CD4-positive, alpha-beta T cell (primary cell): ENCODE measurements at regions of chr16 and their contacts with region 1.

Region 1: GRCh38 chr16:55465077-55465896 is 13.7 kb upstream of the MMP2 start:
- DNase-seq: peak; percentile 72 to 88 (median 76)
- ATAC-seq: peak; percentile 99
- H3K4me3 ChIP-seq: no peak overlapping the region
- H3K4me3 Mint-ChIP-seq: no peak overlapping the region
- H3K27ac ChIP-seq: no peak overlapping the region
- H3K27ac Mint-ChIP-seq: no peak overlapping the region
- H3K4me1 ChIP-seq: peaks cover 2% of the 10 kb centered on the region
- H3K4me1 Mint-ChIP-seq: no peaks in the 10 kb centered on the region
- H3K27me3 ChIP-seq: no peaks in the 10 kb centered on the region
- H3K27me3 Mint-ChIP-seq: peaks cover 5% of the 10 kb centered on the region
- CTCF ChIP-seq: peak; percentile 99

Region 2: GRCh38 chr16:55389426-55390073 is 75.7 kb before region 1 on chr16:
- CTCF ChIA-PET with region 1: no interaction called
- POLR2A ChIA-PET with region 1: no interaction called
- intact Hi-C with region 1: no loop called
- DNase-seq: no peak
- ATAC-seq: no peak
- H3K4me3 ChIP-seq: no peak overlapping the region
- H3K4me3 Mint-ChIP-seq: no peak overlapping the region
- H3K27ac ChIP-seq: no peak overlapping the region
- H3K27ac Mint-ChIP-seq: no peak overlapping the region
- H3K4me1 ChIP-seq: no peaks in the 10 kb centered on the region
- H3K4me1 Mint-ChIP-seq: no peaks in the 10 kb centered on the region
- H3K27me3 ChIP-seq: peaks cover 0 to 3% of the 10 kb centered on the region in 2 experiments
- H3K27me3 Mint-ChIP-seq: peaks cover 18% of the 10 kb centered on the region
- CTCF ChIP-seq: no peak

Region 3: GRCh38 chr16:55508941-55509931 is 43.9 kb after region 1 on chr16 and contains the start of gene LPCAT2:
- CTCF ChIA-PET with region 1: no interaction called
- POLR2A ChIA-PET with region 1: no interaction called
- intact Hi-C with region 1: no loop called
- DNase-seq: peak in 5 of 14 experiments; percentile 10 to 64 (median 18)
- ATAC-seq: peak; percentile 34
- H3K4me3 ChIP-seq: peak within 1 kb of the TSS; percentile 37
- H3K4me3 Mint-ChIP-seq: peak within 1 kb of the TSS; percentile 71
- H3K27ac ChIP-seq: no peak within 1 kb of the TSS
- H3K27ac Mint-ChIP-seq: no peak within 1 kb of the TSS
- H3K4me1 ChIP-seq: peaks cover 10% of the 10 kb centered on the region
- H3K4me1 Mint-ChIP-seq: peaks cover 11% of the 10 kb centered on the region
- H3K27me3 ChIP-seq: peaks cover 20 to 26% of the 10 kb centered on the region in 2 experiments
- H3K27me3 Mint-ChIP-seq: peaks cover 60% of the 10 kb centered on the region
- CTCF ChIP-seq: no peak
- total RNA-seq, gene LPCAT2: 0.22 to 0.36 TPM

Region 4: DNA sequence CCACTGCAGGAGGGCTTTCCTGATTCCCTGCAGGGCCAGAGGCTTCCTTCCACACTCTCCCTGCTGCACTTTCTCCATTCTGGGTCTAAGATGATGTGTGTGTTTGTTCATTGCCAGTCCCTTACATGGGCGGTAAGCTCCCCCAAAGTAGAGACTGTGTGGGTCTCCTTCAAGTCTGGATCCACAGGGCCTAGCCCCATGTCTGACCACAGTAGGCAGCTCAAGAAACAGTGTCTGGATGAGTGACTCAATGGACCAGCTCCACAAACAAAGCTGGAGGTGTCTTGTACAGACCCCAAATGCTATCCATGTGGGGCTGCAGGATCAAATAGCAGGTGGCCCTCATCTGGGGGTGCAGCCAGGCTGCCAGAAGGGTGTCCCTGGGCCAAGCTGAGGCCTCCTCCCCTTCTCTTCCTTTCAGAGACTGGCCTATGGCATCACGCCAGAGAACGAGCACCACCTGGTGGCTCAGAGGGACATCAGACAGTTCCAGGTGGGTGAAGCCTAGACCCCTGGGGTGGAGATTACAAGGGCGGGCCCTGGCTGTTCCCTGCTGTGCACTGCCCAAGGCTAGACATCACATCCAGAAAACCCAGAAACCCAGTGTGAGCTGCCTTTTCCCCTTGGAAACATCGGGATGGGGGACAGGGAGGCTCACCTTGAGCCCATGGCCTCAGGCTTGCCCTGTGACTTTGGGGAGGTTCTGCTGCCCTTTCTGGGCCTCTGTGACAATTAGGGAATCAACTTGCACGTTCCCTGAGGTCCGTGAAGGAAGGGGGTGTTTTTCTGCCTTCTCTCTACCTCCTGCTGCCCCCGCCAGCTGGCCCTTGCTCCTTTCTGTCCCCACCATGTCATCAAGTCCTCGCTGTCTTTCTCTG is 236.4 kb after region 1 on chr16:
- CTCF ChIA-PET with region 1: interaction called, 3 read pairs
- POLR2A ChIA-PET with region 1: no interaction called
- intact Hi-C with region 1: loop called (anchors 1 to 2 kb)
- DNase-seq: peak in 10 of 14 experiments; percentile 1 to 50 (median 16)
- ATAC-seq: no peak
- H3K4me3 ChIP-seq: no peak overlapping the region
- H3K4me3 Mint-ChIP-seq: no peak overlapping the region
- H3K27ac ChIP-seq: no peak overlapping the region
- H3K27ac Mint-ChIP-seq: no peak overlapping the region
- H3K4me1 ChIP-seq: peaks cover 4% of the 10 kb centered on the region
- H3K4me1 Mint-ChIP-seq: no peaks in the 10 kb centered on the region
- H3K27me3 ChIP-seq: no peaks in the 10 kb centered on the region
- H3K27me3 Mint-ChIP-seq: peaks cover 14% of the 10 kb centered on the region
- CTCF ChIP-seq: no peak

Region 5: GRCh38 chr16:55842369-55843104 is 377.2 kb after region 1 on chr16:
- CTCF ChIA-PET with region 1: no interaction called
- POLR2A ChIA-PET with region 1: no interaction called
- intact Hi-C with region 1: loop called (anchors 2 kb)
- DNase-seq: peak in 5 of 14 experiments; percentile 3 to 62 (median 50)
- ATAC-seq: no peak
- H3K4me3 ChIP-seq: no peak overlapping the region
- H3K4me3 Mint-ChIP-seq: no peak overlapping the region
- H3K27ac ChIP-seq: no peak overlapping the region
- H3K27ac Mint-ChIP-seq: no peak overlapping the region
- H3K4me1 ChIP-seq: no peaks in the 10 kb centered on the region
- H3K4me1 Mint-ChIP-seq: no peaks in the 10 kb centered on the region
- H3K27me3 ChIP-seq: peaks cover 10% of the 10 kb centered on the region in 2 experiments
- H3K27me3 Mint-ChIP-seq: peaks cover 29% of the 10 kb centered on the region
- CTCF ChIP-seq: peak; percentile 71

Region 6: DNA sequence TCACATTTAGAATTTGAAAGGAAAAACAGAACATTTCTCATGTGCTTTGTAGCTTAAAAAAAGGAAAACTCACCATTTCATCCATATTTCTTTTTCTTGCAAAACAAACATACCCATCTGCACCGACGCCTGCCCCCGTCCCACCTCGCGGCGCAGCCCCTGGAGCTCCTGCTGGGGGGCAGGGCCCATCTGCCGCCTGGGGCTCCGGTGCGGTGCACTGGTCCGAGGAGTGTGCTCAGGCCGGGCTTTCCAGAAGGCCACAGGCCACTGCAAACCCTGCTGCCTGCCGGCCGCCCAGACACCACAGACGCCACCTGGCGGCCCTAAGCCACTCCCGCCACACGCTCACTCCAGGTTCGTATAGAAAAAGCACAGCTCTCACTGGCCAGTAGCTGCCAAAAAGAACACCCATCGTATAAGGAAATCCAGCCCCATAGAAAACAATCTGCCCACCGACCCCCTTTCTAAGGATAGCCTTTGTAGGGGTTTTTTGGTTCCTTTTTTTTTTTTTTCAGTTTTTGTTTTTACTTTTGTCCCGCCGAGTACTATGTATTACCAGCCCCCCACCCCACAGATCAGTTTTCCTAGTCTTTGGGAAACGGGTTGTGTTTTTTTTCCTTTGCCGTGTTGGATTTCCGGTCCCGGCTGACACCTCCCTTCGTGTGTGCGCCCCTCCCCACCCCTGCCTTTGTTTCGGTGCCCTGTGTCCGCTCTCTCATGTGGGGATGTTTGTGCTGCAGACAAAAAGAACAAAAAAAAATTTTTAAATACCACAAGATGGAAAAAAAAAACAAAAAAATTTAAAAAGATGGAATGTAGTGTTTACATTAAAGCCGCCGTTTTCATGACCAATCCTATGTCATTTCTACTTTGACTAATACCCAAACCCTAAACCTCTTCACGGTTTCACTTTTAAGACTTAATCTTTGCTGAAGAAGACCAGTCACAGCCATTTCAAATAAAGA is 891.3 kb after region 1 on chr16:
- CTCF ChIA-PET with region 1: no interaction called
- POLR2A ChIA-PET with region 1: no interaction called
- intact Hi-C with region 1: loop called in 1 of 2 experiments (anchors 5 kb)
- DNase-seq: peak; percentile 25 to 77 (median 48)
- ATAC-seq: peak; percentile 75
- H3K4me3 ChIP-seq: peak overlapping the region; percentile 55
- H3K4me3 Mint-ChIP-seq: peak overlapping the region; percentile 90
- H3K27ac ChIP-seq: peak overlapping the region in 1 of 2 donors; percentile 13
- H3K27ac Mint-ChIP-seq: peak overlapping the region; percentile 83
- H3K4me1 ChIP-seq: peaks cover 13% of the 10 kb centered on the region
- H3K4me1 Mint-ChIP-seq: peaks cover 31% of the 10 kb centered on the region
- H3K27me3 ChIP-seq: no peaks in the 10 kb centered on the region
- H3K27me3 Mint-ChIP-seq: no peaks in the 10 kb centered on the region
- CTCF ChIP-seq: peak; percentile 86